Heart right ventricle (tissue), 16 donors: ENCODE measurements at regions of chr3 and their contacts with region 1.

Region 1: GRCh38 chr3:39180546-39181346 is 11.6 kb downstream of the XIRP1 start:
- DNase-seq: peak; percentile 91 to 93
- ATAC-seq: peak; percentile 75 to 89 (median 82)
- H3K4me3 ChIP-seq: peak overlapping the region in 9 of 10 donors; percentile 2 to 50 (median 40)
- H3K27ac ChIP-seq: peak overlapping the region; percentile 78 to 97 (median 92)
- H3K4me1 ChIP-seq: peaks cover 17 to 81% (median 59%) of the 10 kb centered on the region in 9 donors
- H3K27me3 ChIP-seq: no peaks in the 10 kb centered on the region
- CTCF ChIP-seq: peak in 6 of 9 donors; percentile 24 to 51 (median 46)

Region 2: DNA sequence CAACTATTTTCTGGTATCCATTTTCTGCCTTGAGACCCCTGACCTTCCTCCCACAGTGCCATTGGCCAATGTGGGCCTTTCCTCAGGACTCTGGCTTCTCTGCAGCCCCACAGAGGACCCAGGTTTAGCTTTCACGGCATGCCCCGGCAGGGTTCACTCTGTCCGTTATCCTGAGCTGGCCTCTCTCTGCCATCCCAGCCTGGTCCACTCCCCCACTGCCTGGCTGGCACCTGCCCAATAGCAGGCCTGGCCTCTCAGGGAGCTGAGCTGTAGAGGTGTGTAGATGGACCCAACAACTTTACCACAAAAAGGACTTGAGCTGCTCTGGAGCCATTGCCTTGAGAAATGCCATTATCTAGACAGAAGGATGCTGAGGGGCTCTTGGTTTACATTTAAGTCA is 422.2 kb before region 1 on chr3:
- intact Hi-C with region 1: no loop called
- DNase-seq: no peak
- ATAC-seq: no peak
- H3K4me3 ChIP-seq: no peak overlapping the region
- H3K27ac ChIP-seq: no peak overlapping the region
- H3K4me1 ChIP-seq: no peaks in the 10 kb centered on the region
- H3K27me3 ChIP-seq: peaks cover 0 to 10% (median 0%) of the 10 kb centered on the region in 7 donors
- CTCF ChIP-seq: no peak

Region 3: GRCh38 chr3:39107388-39108199 is 73.2 kb before region 1 on chr3 and contains the starts of genes GORASP1 and TTC21A:
- intact Hi-C with region 1: loop called in 5 of 10 experiments (anchors 2 to 10 kb)
- DNase-seq: peak; percentile 87 to 92
- ATAC-seq: peak; percentile 89 to 95 (median 92)
- H3K4me3 ChIP-seq: peak within 1 kb of the TSS; percentile 71 to 100 (median 94)
- H3K27ac ChIP-seq: peak within 1 kb of the TSS; percentile 90 to 99 (median 96)
- H3K4me1 ChIP-seq: peaks cover 24 to 54% (median 44%) of the 10 kb centered on the region in 9 donors
- H3K27me3 ChIP-seq: no peaks in the 10 kb centered on the region
- CTCF ChIP-seq: peak in 3 of 9 donors; percentile 4 to 24 (median 5)
- total RNA-seq, gene GORASP1: 35.8 to 54.2 (median 41.1) TPM
- total RNA-seq, gene TTC21A: 1.1 to 3.1 (median 1.5) TPM

Region 4: DNA sequence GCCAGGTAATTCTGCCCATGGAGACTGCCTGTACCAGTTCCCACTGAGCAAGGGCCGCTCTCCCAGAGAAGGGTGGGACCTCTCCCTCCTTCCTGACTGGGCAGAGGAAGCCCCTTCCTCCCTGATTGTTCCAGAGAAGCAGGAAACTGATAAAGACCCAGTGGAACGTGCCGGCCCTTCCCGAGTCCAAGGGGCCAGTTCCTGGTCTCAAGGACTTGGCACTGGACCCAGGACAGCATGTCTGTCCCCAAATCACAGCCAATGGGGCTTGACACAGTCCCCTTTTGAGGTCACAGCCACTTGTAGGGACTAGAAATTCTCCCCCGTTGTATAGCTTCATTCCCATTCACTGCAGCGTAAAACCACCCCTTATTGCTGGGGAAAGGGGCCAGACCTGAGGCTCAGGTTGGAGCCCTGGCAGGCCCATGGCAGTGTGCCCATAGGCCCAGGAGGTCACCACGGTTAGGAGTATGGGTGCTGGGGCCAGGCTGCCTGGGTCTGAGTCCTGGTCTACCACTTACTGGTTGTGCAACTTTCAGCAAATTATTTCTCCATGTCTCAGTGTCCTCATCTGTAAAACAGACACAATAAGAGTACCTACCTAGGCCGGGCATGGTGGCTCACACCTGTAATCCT is 45.5 kb before region 1 on chr3:
- intact Hi-C with region 1: loop called in 7 of 10 experiments (anchors 2 to 10 kb)
- DNase-seq: peak; percentile 49 to 50
- ATAC-seq: peak; percentile 34 to 83 (median 52)
- H3K4me3 ChIP-seq: no peak overlapping the region
- H3K27ac ChIP-seq: peak overlapping the region in 6 of 10 donors; percentile 9 to 63 (median 47)
- H3K4me1 ChIP-seq: peaks cover 13 to 55% (median 33%) of the 10 kb centered on the region in 9 donors
- H3K27me3 ChIP-seq: no peaks in the 10 kb centered on the region
- CTCF ChIP-seq: no peak

Region 5: GRCh38 chr3:39141171-39141995 is 39.4 kb before region 1 on chr3:
- intact Hi-C with region 1: loop called in 7 of 10 experiments (anchors 5 to 10 kb)
- DNase-seq: peak; percentile 60 to 67
- ATAC-seq: peak; percentile 17 to 61 (median 50)
- H3K4me3 ChIP-seq: no peak overlapping the region
- H3K27ac ChIP-seq: peak overlapping the region in 8 of 10 donors; percentile 4 to 65 (median 47)
- H3K4me1 ChIP-seq: peaks cover 37 to 78% (median 58%) of the 10 kb centered on the region in 9 donors
- H3K27me3 ChIP-seq: no peaks in the 10 kb centered on the region
- CTCF ChIP-seq: no peak

Region 6: DNA sequence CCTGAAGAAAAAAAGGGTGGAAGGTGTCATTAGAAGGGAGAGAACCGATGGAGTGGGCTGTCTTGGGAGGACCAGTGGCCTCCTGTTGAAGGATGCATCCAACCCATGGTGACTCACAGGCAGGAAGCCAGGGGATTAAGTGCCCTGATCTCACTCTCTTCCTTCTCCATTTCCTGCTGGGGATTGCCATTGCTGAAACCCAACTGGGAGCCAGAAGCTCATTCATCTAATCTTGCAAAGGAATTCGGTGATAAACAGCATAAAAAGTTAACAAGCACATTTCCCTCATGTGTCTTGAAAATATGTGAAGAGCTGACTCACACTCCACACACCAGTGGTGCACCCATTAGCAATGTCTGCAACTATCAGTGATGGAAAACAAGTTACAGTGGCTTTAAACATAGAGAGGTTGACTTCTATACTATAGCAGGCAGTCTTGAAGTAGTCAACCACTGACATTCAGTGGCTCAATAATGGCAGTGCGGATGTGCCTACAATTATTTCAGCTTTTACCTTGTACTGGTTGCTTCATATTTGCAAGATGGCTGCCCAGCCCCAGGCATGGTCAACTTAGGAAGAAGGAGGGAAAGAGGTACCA is 14.5 kb before region 1 on chr3:
- intact Hi-C with region 1: loop called in 1 of 10 experiments (anchors 2 kb)
- DNase-seq: peak in 1 of 2 donors; percentile 22
- ATAC-seq: peak; percentile 28 to 92 (median 62)
- H3K4me3 ChIP-seq: no peak overlapping the region
- H3K27ac ChIP-seq: peak overlapping the region in 2 of 10 donors; percentile 59 to 72
- H3K4me1 ChIP-seq: peaks cover 0 to 47% (median 9%) of the 10 kb centered on the region in 9 donors
- H3K27me3 ChIP-seq: no peaks in the 10 kb centered on the region
- CTCF ChIP-seq: no peak